A549 (cell line): ENCODE measurements at regions of chr7 and their contacts with region 1.

Region 1: DNA sequence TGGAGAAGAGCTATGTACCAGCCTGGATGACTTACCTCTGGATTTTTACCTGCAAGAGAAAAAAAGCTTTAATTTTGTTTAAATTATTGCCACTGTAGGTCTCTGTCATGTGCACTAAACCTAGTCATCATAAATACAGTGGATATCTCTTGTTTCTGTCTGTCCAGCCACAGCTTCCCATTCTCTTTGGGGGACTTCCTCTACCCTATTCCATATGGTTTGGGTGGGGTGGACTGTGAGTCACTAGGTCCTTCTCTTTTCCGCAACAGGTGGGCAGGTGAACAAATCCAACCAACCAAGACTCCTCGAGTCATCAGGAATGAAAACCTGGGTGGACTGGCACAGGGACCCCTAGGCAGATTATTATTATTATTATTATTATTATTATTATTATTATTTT is 87.3 kb upstream of the CYTH3 start:
- DNase-seq: no peak
- ATAC-seq: no peak
- H3K4me3 ChIP-seq: no peak overlapping the region
- H3K27ac ChIP-seq: no peak overlapping the region
- H3K4me1 ChIP-seq: no peaks in the 10 kb centered on the region
- CTCF ChIP-seq: no peak
- EP300 ChIP-seq: no peak
- POLR2A ChIP-seq: no peak
- RAD21 ChIP-seq: no peak

Region 2: GRCh38 chr7:6382817-6383216 is 23.1 kb after region 1 on chr7:
- CTCF ChIA-PET with region 1: interaction called, 3 read pairs
- POLR2A ChIA-PET with region 1: interaction called, 12 read pairs
- DNase-seq: no peak
- ATAC-seq: no peak
- H3K4me3 ChIP-seq: no peak overlapping the region
- H3K27ac ChIP-seq: peak overlapping the region in 1 of 2 experiments; percentile 56; a peak in 2 of 6 replicates
- H3K4me1 ChIP-seq: peaks cover 83% of the 10 kb centered on the region
- CTCF ChIP-seq: no peak
- EP300 ChIP-seq: no peak
- POLR2A ChIP-seq: no peak
- RAD21 ChIP-seq: no peak

Region 3: GRCh38 chr7:6496842-6497636 is 137.3 kb after region 1 on chr7:
- CTCF ChIA-PET with region 1: no interaction called
- POLR2A ChIA-PET with region 1: no interaction called
- DNase-seq: no peak
- ATAC-seq: no peak
- H3K4me3 ChIP-seq: no peak overlapping the region
- H3K27ac ChIP-seq: no peak overlapping the region
- H3K4me1 ChIP-seq: no peaks in the 10 kb centered on the region
- CTCF ChIP-seq: no peak
- EP300 ChIP-seq: no peak
- POLR2A ChIP-seq: no peak
- RAD21 ChIP-seq: no peak